Posterior cingulate gyrus (tissue), 11 donors: ENCODE measurements at regions of chr19 and their contacts with region 1.

Region 1: DNA sequence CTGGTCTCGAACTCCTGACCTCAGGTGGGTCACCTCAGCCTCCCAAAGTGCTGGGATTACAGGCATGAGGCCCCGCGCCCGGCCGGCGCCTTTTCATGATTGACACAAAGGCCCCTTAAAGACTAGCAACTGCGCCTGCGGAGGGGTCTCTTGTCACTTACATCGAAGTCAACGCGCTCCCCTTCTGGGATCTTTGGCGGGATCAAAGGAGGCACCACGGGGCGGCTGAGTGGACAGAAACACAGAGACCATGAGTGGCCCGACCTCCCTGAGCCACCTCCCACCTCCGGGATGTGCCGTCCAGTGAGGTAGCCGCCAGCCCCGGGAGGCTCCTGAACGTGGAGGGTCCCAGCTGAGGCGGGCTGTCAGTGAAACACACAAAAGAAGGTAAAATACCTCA is 7.3 kb downstream of the TNNT1 start:
- DNase-seq: no peak

Region 2: GRCh38 chr19:55418185-55418584 is 276.5 kb after region 1 on chr19:
- intact Hi-C with region 1: loop called (anchors 1 kb)
- DNase-seq: peak in 7 of 10 donors; percentile 44 to 92 (median 63)